ENCODE measurements at regions of chr11 and their contacts with region 1.

Region 1: GRCh38 chr11:62905927-62906531 is 15.1 kb downstream of the CHRM1 start:
- DNase-seq: peak; percentile 83
- H3K4me3 Mint-ChIP-seq: no peak overlapping the region
- H3K27ac Mint-ChIP-seq: no peak overlapping the region
- H3K4me1 Mint-ChIP-seq: peaks cover 17% of the 10 kb centered on the region
- H3K27me3 Mint-ChIP-seq: peaks cover 11% of the 10 kb centered on the region

Region 2: DNA sequence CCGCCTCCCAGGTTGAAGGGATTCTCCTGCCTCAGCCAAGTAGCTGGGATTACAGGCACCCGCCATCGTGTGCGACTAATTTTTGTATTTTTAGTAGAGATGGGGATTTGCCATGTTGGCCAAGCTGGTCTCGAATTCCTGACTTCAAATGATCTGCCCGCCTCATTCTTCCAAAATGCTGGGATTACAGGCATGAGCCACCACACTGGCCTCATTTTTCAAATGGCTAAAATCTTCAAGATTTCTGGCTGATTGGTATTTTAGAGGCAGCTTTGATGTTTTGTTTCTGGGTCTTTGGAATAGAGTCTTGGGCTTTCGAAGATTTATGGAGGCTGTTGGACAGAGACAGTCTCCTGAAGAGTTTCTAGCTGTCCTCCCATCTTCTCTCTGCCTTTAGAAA is 31.2 kb before region 1 on chr11:
- CTCF ChIA-PET with region 1: no interaction called
- POLR2A ChIA-PET with region 1: no interaction called
- DNase-seq: no peak
- H3K4me3 Mint-ChIP-seq: no peak overlapping the region
- H3K27ac Mint-ChIP-seq: no peak overlapping the region
- H3K4me1 Mint-ChIP-seq: peaks cover 11% of the 10 kb centered on the region
- H3K27me3 Mint-ChIP-seq: no peaks in the 10 kb centered on the region

Region 3: DNA sequence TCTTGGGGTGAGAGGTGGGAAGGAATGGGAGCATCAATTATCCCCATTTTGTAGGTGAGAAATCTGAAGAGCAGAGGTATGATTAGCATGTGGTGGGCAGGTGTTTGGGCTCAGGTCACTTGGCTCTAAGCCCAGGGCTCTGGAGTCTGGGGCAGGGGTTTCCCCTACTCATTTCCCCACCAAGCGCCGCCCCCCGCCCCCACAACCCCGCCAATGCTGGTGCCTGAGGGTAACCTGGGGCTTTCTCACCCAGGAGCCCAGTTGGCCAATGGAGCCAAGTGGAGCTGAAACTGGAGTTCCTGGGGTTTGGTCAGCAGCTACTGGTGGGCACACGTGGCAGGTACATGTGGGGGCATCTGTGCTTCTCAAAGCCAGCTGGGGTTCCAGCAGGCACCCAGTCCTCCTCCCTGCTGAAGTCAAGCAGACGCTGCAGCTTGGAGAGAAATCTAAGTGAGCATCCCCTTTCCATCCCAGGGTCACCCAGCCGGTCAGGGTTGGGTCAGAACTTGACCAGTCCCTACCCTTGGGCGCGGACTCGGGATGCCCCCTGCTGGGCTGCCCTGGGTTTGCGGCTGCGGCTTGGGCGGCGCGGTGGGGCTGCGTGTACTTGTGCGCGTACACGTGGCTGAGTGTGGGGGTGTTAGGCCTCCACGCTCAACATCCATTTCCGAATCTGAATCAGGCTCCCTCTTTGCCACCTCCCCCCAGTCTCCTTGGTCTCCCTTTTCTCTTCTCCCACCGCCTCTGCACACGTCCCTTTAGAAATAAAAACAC is 16.8 kb after region 1 on chr11:
- CTCF ChIA-PET with region 1: interaction called, 17 read pairs
- POLR2A ChIA-PET with region 1: no interaction called
- DNase-seq: no peak
- H3K4me3 Mint-ChIP-seq: no peak overlapping the region
- H3K27ac Mint-ChIP-seq: no peak overlapping the region
- H3K4me1 Mint-ChIP-seq: peaks cover 20% of the 10 kb centered on the region
- H3K27me3 Mint-ChIP-seq: peaks cover 71% of the 10 kb centered on the region

Region 4: GRCh38 chr11:63023841-63024648 is 118.0 kb after region 1 on chr11:
- CTCF ChIA-PET with region 1: interaction called, 44 read pairs
- POLR2A ChIA-PET with region 1: no interaction called
- DNase-seq: peak; percentile 85
- H3K4me3 Mint-ChIP-seq: no peak overlapping the region
- H3K27ac Mint-ChIP-seq: no peak overlapping the region
- H3K4me1 Mint-ChIP-seq: peaks cover 4% of the 10 kb centered on the region
- H3K27me3 Mint-ChIP-seq: peaks cover 13% of the 10 kb centered on the region

Measured in activated CD4-positive, alpha-beta T cell treated with anti-CD3 and anti-CD28 coated beads, Interleukin-2, amount 10 ng/mL, durations not matched to agents 7 days and 5 days (primary cell).